ENCODE measurements at regions of chr6 and their contacts with region 1.

Region 1: GRCh38 chr6:107489636-107490565 is at the start of gene SOBP:
- DNase-seq: peak in 1 of 2 donors; percentile 88
- H3K4me3 ChIP-seq: peak within 1 kb of the TSS; percentile 55
- CTCF ChIP-seq: no peak
- POLR2A ChIP-seq: no peak
- total RNA-seq, gene SOBP: 0.27 to 2.7 (median 1.5) TPM

Region 2: DNA sequence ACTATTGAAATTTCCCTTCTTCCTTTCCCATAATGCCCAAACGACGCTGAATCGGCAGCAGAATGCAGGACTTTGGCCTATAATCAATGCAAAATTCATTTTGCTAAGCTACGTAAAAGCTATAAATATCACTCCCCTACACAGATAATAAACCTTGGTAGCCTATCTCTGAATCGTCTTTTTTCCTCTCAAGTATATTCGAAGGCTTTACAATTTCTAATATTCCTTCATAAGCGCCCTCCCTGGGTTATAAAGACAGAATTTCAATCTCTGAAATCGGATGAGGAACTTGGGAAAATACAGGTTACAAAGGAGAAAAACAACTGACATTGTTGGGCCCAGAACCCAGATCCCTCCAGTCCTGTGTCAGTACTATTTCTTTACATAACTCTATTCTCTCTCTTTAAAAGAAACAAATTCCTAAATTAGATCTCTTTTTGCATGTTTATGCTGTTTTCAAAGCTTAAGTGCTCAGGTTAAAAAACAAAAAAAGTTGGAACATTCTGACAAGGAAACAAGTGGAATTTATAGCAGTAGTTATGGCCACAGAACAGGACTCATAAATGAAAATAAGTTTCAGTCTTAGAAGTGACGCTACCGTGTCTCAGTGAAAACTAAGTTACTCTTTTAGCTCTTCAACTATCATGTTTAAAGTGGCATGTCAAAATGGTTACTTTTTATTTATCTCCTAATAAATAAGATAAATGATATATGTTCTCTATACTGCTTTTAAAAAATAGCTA is 1520.2 kb after region 1 on chr6:
- intact Hi-C with region 1: loop called (anchors 10 kb)
- DNase-seq: no peak
- H3K4me3 ChIP-seq: peak overlapping the region; percentile 94
- CTCF ChIP-seq: no peak
- POLR2A ChIP-seq: no peak